GM12878 (cell line): ENCODE measurements at regions of chr19 and their contacts with region 1.

Region 1: GRCh38 chr19:1373534-1374249 is 10.0 kb upstream of the NDUFS7 start:
- DNase-seq: no peak
- ATAC-seq: no peak
- H3K4me3 ChIP-seq: no peak overlapping the region
- H3K27ac ChIP-seq: no peak overlapping the region
- H3K4me1 ChIP-seq: no peaks in the 10 kb centered on the region
- H3K27me3 ChIP-seq: no peaks in the 10 kb centered on the region
- CTCF ChIP-seq: no peak
- EP300 ChIP-seq: no peak
- POLR2A ChIP-seq: no peak
- RAD21 ChIP-seq: no peak

Region 2: DNA sequence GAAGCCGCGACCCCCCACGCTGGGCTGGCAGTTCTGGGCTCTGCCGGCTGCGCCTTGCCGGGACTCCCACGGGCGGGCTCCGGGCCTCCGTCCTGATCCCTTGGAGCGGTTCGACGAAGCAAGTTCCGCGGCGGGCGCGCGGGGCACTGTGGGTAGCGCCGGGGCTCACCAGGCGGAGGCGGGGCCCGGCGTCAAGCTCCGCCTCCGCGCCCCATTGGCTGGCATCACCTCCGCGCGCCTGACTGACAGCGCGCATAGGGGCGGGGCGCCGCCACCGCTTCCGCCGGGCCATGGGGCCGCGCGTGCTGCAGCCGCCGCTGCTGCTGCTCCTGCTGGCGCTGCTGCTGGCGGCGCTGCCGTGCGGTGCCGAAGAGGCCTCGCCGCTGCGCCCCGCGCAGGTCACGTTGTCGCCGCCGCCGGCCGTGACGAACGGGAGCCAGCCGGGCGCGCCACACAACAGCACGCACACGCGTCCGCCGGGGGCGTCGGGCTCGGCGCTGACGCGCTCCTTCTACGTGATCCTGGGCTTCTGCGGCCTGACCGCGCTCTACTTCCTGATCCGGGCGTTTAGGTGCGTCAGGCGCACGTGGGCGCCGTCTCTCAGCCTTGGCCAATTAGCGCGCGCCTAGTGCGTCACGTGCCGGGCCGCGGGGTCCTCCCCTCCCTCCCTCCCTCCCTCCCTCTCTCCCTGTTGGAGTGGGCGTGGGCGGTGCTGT is 98.3 kb before region 1 on chr19 and contains the start of gene FAM174C:
- CTCF ChIA-PET with region 1: interaction called, 40 read pairs
- POLR2A ChIA-PET with region 1: no interaction called
- RAD21 ChIA-PET with region 1: interaction called, 22 read pairs
- SMC1A ChIA-PET with region 1: interaction called, 12 read pairs
- in situ Hi-C with region 1: loop called (anchors 5 kb)
- intact Hi-C with region 1: loop called (anchors 1 kb)
- DNase-seq: peak; percentile 87
- ATAC-seq: peak; percentile 83
- H3K4me3 ChIP-seq: peak within 1 kb of the TSS; percentile 85
- H3K27ac ChIP-seq: peak within 1 kb of the TSS; percentile 97
- H3K4me1 ChIP-seq: peaks cover 26% of the 10 kb centered on the region
- H3K27me3 ChIP-seq: no peaks in the 10 kb centered on the region
- CTCF ChIP-seq: no peak
- EP300 ChIP-seq: no peak
- POLR2A ChIP-seq: peak; percentile 89
- RAD21 ChIP-seq: no peak
- polyA plus RNA-seq, gene FAM174C: 0.89 to 6.9 TPM

Region 3: DNA sequence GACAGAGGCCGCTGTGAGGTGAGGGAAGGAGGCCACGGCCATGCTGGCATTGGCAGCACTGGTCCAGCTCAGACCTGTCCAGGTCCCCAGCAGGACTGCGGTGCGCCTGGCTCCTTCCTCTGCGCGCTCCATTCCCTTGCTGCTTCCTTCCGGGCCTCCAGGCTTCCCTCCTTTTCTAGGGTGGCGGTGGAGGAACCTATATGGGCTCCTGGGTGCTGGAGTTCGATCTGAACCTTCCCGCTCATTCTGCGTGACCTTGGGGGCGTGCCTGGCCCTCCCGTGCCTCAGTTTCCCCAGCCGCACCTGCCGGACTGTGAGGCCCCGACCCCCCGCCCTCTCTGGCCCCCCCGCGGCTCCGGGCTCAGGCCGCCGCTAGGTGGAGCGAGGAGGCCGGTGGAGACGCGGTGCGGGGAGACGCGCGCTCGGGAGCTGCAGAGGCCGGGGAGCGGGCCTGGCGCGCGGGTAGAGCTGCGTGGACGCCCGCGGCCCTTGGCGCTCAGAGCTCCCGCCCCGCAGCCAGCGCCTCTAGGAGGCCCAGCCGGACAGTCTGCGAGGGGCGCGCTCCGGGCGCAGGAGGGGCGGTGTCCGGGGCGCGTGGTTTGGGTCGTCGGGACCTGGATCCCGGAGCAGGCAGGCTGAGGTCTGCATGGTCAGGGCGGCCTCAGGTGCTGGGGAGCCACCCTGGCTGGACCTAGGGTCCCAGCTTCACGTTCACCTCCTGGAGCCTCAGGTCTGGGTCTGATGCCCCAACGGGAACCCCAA is 58.0 kb before region 1 on chr19:
- CTCF ChIA-PET with region 1: interaction called, 42 read pairs
- POLR2A ChIA-PET with region 1: interaction called, 5 read pairs
- RAD21 ChIA-PET with region 1: interaction called, 11 read pairs
- SMC1A ChIA-PET with region 1: interaction called, 7 read pairs
- in situ Hi-C with region 1: loop called (anchors 5 kb)
- intact Hi-C with region 1: loop called (anchors 1 kb)
- DNase-seq: no peak
- ATAC-seq: peak; percentile 94
- H3K4me3 ChIP-seq: no peak overlapping the region
- H3K27ac ChIP-seq: no peak overlapping the region
- H3K4me1 ChIP-seq: peaks cover 3% of the 10 kb centered on the region; the same call in 1 of the 2 replicates
- H3K27me3 ChIP-seq: no peaks in the 10 kb centered on the region
- CTCF ChIP-seq: peak; percentile 39 to 69 (median 65); a peak in 5 of 6 replicates
- EP300 ChIP-seq: no peak
- POLR2A ChIP-seq: no peak
- RAD21 ChIP-seq: peak; percentile 86